Activated CD8-positive, alpha-beta T cell treated with anti-CD3 and anti-CD28 coated beads for 36 hours (primary cell): ENCODE measurements at regions of chr19 and their contacts with region 1.

Region 1: DNA sequence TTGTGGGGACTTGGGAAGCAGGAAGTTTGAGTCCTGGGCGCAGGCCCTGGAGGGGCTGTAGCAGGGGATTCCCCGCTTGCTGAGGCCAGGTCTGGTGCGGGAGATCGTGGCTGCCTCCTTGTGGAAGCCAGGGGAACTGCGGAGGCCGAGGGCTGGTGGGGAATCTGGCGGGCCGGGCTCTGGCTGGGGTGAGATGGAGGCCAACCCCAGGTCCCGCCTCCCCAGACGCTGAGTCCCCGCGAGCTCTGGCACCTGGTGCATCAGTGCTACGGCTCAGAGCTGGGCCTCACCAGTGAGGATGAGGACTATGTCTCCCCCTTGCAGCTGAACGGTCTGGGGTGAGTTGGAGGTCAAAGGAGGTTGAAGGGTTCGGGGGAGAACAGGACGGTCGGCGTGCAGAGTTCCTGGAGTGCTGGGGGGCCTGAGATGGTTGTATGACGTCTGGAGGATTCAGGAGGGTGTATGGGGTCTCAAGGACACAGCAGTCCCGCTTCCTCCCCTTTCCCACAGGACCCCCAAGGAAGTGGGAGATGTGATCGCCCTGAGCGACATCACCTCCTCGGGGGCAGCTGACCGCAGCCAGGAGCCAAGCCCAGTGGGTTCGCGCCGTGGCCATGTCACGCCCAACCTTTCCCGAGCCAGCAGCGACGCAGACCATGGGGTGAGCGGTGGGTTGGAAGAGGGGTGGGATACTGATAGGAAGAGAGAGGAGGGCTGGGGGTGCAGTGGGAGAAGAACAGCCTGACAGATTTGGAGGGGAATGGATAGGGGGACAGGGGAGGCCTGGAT is 13.1 kb downstream of the GRAMD1A start:
- DNase-seq: peak; percentile 89
- ATAC-seq: peak; percentile 92
- H3K4me3 Mint-ChIP-seq: peak overlapping the region; percentile 40
- H3K27ac Mint-ChIP-seq: peak overlapping the region; percentile 74
- H3K4me1 Mint-ChIP-seq: peaks cover 59% of the 10 kb centered on the region
- H3K27me3 Mint-ChIP-seq: no peaks in the 10 kb centered on the region
- CTCF ChIP-seq: peak; percentile 99

Region 2: GRCh38 chr19:34963573-34964409 is 49.4 kb before region 1 on chr19 and contains the start of gene ZNF792:
- CTCF ChIA-PET with region 1: interaction called, 41 read pairs
- POLR2A ChIA-PET with region 1: interaction called, 6 read pairs
- intact Hi-C with region 1: no loop called
- DNase-seq: peak; percentile 62
- ATAC-seq: peak; percentile 76
- H3K4me3 Mint-ChIP-seq: peak within 1 kb of the TSS; percentile 92
- H3K27ac Mint-ChIP-seq: peak within 1 kb of the TSS; percentile 88
- H3K4me1 Mint-ChIP-seq: peaks cover 23% of the 10 kb centered on the region
- H3K27me3 Mint-ChIP-seq: no peaks in the 10 kb centered on the region
- CTCF ChIP-seq: no peak
- total RNA-seq, gene ZNF792: 5.1 to 5.6 TPM

Region 3: GRCh38 chr19:34985249-34986022 is 27.8 kb before region 1 on chr19:
- CTCF ChIA-PET with region 1: interaction called, 11 read pairs
- POLR2A ChIA-PET with region 1: interaction called, 3 read pairs
- intact Hi-C with region 1: no loop called
- DNase-seq: peak; percentile 51
- ATAC-seq: peak; percentile 66
- H3K4me3 Mint-ChIP-seq: peak overlapping the region; percentile 57
- H3K27ac Mint-ChIP-seq: peak overlapping the region; percentile 89
- H3K4me1 Mint-ChIP-seq: peaks cover 37% of the 10 kb centered on the region
- H3K27me3 Mint-ChIP-seq: no peaks in the 10 kb centered on the region
- CTCF ChIP-seq: no peak

Region 4: DNA sequence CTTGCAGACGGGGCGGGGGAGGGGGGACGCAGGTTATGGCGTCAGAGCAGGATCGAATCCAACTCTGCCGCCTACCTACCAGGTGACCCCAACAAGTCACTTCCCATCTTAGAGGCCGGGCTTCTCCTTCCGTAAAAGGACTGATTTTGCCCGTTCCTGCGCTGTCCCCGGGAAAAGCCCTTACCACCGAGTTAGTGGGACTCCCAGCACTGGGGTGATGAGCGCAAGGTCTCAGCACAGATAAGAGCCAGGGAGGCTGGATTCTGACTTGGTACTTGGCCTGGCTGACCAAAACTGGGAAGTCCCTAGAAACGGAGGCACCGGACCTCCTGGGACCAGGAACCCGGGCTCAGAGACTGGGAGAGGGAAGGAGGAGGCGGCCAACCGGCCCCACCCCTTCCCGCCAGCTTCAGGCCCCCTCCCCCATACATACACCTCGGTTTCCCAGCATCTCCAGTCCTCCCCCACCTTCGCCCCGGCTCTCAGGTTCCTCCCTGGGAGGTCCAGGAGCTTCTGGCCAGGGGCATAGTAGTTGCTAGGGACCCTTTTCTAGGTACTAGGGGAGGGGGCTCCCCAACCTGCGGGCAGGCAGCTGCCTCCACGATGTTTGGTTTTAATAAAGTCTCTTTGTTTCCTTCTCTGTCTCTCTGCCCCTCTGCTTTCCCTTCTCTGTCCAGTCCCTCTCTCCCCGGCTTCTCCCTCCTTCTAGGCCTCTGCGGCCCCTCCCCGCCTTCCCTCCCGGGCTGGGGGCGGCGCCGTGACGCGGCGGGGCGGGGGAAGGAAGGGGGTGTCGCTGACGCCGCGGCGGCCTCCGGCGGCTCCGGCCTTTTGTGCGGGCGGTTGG is 13.5 kb before region 1 on chr19 and contains the start of gene GRAMD1A:
- CTCF ChIA-PET with region 1: interaction called, 31 read pairs
- POLR2A ChIA-PET with region 1: interaction called, 16 read pairs
- intact Hi-C with region 1: no loop called
- DNase-seq: peak; percentile 77
- ATAC-seq: peak; percentile 54
- H3K4me3 Mint-ChIP-seq: peak within 1 kb of the TSS; percentile 99
- H3K27ac Mint-ChIP-seq: peak within 1 kb of the TSS; percentile 97
- H3K4me1 Mint-ChIP-seq: peaks cover 56% of the 10 kb centered on the region
- H3K27me3 Mint-ChIP-seq: no peaks in the 10 kb centered on the region
- CTCF ChIP-seq: no peak
- total RNA-seq, gene GRAMD1A: 128 to 134 TPM

Region 5: DNA sequence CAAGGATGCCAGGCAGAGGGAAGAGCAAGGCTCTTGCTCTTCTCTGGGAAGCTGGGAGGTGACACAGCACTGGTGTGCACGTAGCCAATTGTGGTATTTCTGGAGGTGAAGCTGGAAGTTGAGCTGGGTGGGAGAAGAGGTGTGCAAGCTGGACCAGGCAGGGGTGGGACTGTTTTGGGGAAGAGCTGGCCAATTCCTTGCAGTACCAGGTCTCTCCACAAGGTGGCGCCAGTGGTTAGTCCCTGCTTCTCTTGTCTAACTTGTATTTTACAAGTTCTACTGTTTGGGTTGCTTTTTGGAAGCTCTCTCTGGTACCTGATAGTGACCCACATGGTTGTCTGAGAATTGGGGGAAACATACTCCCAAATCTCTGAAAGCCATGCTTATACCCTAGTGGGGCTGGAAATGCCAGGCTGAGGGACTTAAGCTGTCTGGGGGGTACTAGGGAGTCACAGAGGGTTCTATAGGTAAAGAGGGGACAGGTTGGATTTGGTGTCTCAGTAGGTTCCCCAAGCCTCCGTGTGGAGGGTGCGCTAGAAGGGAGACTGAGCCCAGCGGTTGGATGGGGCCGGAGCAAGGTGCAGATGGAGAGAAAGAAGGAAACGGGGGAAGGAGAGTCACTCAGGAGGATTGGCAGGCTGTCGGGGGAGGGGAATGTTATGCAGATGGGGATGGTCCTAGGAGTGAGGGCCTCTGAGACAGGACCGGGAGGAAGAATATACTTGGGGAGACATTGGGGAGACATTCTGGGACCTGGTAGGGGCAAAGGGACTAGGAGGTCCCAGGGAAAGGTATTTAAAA is 31.3 kb after region 1 on chr19:
- CTCF ChIA-PET with region 1: interaction called, 12 read pairs
- POLR2A ChIA-PET with region 1: no interaction called
- intact Hi-C with region 1: no loop called
- DNase-seq: peak; percentile 69
- ATAC-seq: no peak
- H3K4me3 Mint-ChIP-seq: no peak overlapping the region
- H3K27ac Mint-ChIP-seq: no peak overlapping the region
- H3K4me1 Mint-ChIP-seq: peaks cover 13% of the 10 kb centered on the region
- H3K27me3 Mint-ChIP-seq: peaks cover 6% of the 10 kb centered on the region
- CTCF ChIP-seq: peak; percentile 98